HCT116 (cell line): ENCODE measurements at regions of chr10 and their contacts with region 1.

Region 1: GRCh38 chr10:97025613-97026242 is 160.0 kb downstream of the SLIT1 start:
- DNase-seq: peak; percentile 47
- ATAC-seq: peak; percentile 87
- H3K4me3 ChIP-seq: no peak overlapping the region
- H3K27ac ChIP-seq: no peak overlapping the region
- H3K4me1 ChIP-seq: peaks cover 11 to 20% of the 10 kb centered on the region in 2 experiments; a peak in 3 of 4 replicates
- H3K27me3 ChIP-seq: no peaks in the 10 kb centered on the region; the same call in 1 of the 2 replicates
- CTCF ChIP-seq: peak; percentile 66 to 87 (median 82)
- POLR2A ChIP-seq: no peak
- RAD21 ChIP-seq: peak; percentile 64

Region 2: GRCh38 chr10:96380817-96381216 is 644.9 kb before region 1 on chr10:
- CTCF ChIA-PET with region 1: no interaction called
- POLR2A ChIA-PET with region 1: no interaction called
- RAD21 ChIA-PET with region 1: no interaction called
- intact Hi-C with region 1: loop called (anchors 5 kb)
- DNase-seq: no peak
- ATAC-seq: no peak
- H3K4me3 ChIP-seq: no peak overlapping the region
- H3K27ac ChIP-seq: no peak overlapping the region
- H3K4me1 ChIP-seq: peaks cover 0 to 11% of the 10 kb centered on the region in 2 experiments; a peak in 3 of 4 replicates
- H3K27me3 ChIP-seq: no peaks in the 10 kb centered on the region
- CTCF ChIP-seq: no peak
- POLR2A ChIP-seq: no peak
- RAD21 ChIP-seq: no peak

Region 3: GRCh38 chr10:96395931-96396877 is 629.5 kb before region 1 on chr10:
- CTCF ChIA-PET with region 1: no interaction called
- POLR2A ChIA-PET with region 1: no interaction called
- RAD21 ChIA-PET with region 1: no interaction called
- intact Hi-C with region 1: loop called (anchors 2 kb)
- DNase-seq: peak; percentile 21
- ATAC-seq: peak; percentile 96
- H3K4me3 ChIP-seq: no peak overlapping the region
- H3K27ac ChIP-seq: no peak overlapping the region
- H3K4me1 ChIP-seq: no peaks in the 10 kb centered on the region
- H3K27me3 ChIP-seq: peaks cover 26% of the 10 kb centered on the region
- CTCF ChIP-seq: peak; percentile 79 to 96 (median 93)
- POLR2A ChIP-seq: no peak
- RAD21 ChIP-seq: peak; percentile 86

Region 4: DNA sequence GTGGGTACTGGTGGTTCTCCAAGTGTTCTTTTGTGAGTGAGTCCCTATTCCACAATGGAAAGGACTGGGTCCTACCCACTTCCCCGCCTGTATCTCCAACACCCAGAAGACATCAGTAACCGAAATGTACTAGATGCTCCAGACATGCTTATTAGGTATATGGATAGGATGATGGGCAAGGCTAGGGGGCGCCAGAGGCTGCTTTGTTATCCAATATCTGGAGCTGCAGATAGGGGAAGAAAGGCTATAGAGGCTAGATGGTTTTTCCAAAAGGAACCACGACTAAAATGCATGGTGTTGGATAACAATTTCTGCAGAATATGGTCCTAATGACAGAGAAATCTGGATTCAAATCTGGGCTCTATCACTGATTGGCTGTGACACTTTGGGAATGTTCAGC is 382.8 kb before region 1 on chr10:
- CTCF ChIA-PET with region 1: interaction called, 40 read pairs
- POLR2A ChIA-PET with region 1: interaction called, 3 read pairs
- RAD21 ChIA-PET with region 1: interaction called in 1 of 2 experiments, 3 read pairs
- intact Hi-C with region 1: loop called (anchors 5 kb)
- DNase-seq: peak; percentile 31
- ATAC-seq: peak; percentile 68
- H3K4me3 ChIP-seq: no peak overlapping the region
- H3K27ac ChIP-seq: no peak overlapping the region
- H3K4me1 ChIP-seq: peaks cover 3 to 22% of the 10 kb centered on the region in 2 experiments; a peak in 3 of 4 replicates
- H3K27me3 ChIP-seq: no peaks in the 10 kb centered on the region
- CTCF ChIP-seq: peak; percentile 69 to 77 (median 71); a peak in 5 of 6 replicates
- POLR2A ChIP-seq: no peak
- RAD21 ChIP-seq: peak; percentile 80

Region 5: GRCh38 chr10:96765406-96766240 is 260.1 kb before region 1 on chr10:
- CTCF ChIA-PET with region 1: interaction called, 11 read pairs
- POLR2A ChIA-PET with region 1: no interaction called
- RAD21 ChIA-PET with region 1: no interaction called
- intact Hi-C with region 1: loop called (anchors 1 kb)
- DNase-seq: peak; percentile 37
- ATAC-seq: peak; percentile 98
- H3K4me3 ChIP-seq: no peak overlapping the region
- H3K27ac ChIP-seq: no peak overlapping the region
- H3K4me1 ChIP-seq: no peaks in the 10 kb centered on the region
- H3K27me3 ChIP-seq: no peaks in the 10 kb centered on the region
- CTCF ChIP-seq: peak; percentile 84 to 95 (median 95)
- POLR2A ChIP-seq: no peak
- RAD21 ChIP-seq: peak; percentile 82

Region 6: DNA sequence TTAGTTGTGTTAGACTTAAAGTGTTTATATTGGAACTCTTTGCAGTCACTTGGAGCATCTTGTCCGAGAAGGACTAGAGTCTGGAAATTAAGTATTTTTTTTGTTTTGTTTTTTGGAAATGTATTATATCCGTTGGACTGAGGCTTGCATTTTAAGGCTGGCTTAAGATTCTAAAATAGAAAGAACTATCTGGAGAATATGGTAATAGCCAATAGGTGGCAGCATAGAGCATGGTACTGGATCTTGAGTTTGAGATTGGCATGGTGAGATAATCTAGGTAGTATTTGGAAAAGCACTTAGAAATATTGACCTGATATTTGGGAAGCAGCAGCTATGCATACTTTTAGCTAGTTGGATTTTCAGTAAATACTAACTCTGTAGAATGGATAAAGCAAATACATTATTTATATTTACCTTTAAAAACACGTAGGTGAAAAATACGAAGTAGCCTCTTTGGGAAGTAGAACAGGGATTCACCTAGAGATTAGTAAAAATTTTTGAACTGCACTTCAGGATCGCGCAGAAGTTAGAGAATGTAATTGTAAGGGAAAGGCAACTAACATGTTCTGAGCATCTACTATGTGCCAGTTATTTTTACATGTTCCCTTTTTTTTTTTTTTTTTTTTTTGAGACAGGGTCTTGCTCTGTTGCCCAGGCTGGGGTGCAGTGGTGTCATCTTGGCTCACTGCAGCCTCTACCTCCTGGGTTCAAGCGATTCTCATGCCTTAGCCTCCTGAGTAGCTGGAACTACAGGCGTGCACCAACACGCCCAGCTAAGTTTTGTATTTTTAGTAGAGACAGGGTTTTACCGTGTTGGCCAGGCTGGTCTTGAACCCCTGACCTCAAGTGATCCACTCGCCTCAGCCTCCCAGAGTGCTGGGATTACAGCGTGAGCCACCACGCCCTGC is 115.0 kb before region 1 on chr10:
- CTCF ChIA-PET with region 1: interaction called, 5 read pairs
- POLR2A ChIA-PET with region 1: no interaction called
- RAD21 ChIA-PET with region 1: no interaction called
- intact Hi-C with region 1: loop called (anchors 10 kb)
- DNase-seq: peak; percentile 24
- ATAC-seq: peak; percentile 79
- H3K4me3 ChIP-seq: no peak overlapping the region
- H3K27ac ChIP-seq: no peak overlapping the region
- H3K4me1 ChIP-seq: peaks cover 4 to 6% of the 10 kb centered on the region in 2 experiments; a peak in 3 of 4 replicates
- H3K27me3 ChIP-seq: no peaks in the 10 kb centered on the region
- CTCF ChIP-seq: peak; percentile 54 to 77 (median 68); a peak in 5 of 6 replicates
- POLR2A ChIP-seq: no peak
- RAD21 ChIP-seq: peak; percentile 57

Region 7: DNA sequence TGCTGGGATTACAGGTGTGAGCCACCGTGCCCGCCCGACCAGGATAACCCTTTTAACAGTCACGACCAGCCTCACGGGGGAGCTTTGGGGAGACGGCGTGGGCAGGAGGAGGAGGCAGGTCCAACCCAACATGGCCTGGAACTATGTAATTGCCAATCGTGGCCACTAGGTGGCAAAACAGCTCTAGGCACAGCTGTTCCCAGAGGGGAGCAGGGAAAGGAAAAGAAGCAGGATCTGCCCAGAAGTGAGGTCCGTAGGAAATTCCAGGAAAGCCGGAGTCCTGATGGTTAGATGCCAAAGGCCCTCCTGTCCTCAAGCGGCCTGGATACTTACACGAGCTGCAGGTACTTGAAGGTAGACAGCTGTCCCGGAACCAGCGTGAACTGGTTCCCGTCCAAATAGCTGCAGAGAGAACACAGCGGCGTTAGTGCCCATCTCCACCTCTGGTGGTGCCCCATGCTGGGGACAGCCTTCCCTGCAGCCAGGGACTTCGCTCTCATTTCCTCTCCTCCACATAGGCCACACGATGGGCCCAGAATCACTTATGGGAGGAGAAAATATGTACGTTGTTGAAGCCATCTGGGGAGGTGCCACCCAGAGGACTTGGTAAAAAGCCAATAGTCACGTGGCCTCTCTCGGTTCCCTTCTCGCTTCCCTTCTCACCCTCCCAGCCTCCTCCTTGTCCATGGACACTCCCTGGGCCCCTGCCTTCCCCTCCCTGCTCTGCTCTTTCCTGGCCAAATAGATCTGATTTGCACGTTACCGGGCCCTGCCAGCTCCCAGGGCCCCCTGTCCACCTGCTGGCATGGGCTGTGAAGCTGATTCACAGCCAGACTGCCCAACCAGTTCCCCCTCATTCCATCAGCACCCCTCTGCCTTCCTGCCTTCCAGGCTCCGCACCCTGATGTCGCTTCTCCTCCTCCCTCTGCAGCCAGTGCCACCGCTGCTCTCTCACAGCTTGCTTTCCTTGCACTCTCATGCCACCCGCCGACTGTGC is 11.9 kb after region 1 on chr10:
- CTCF ChIA-PET with region 1: interaction called, 107 read pairs
- POLR2A ChIA-PET with region 1: interaction called, 8 read pairs
- RAD21 ChIA-PET with region 1: no interaction called
- intact Hi-C with region 1: no loop called
- DNase-seq: peak; percentile 89
- ATAC-seq: peak; percentile 93
- H3K4me3 ChIP-seq: peak overlapping the region; percentile 38 to 55
- H3K27ac ChIP-seq: no peak overlapping the region
- H3K4me1 ChIP-seq: peaks cover 7 to 15% of the 10 kb centered on the region in 2 experiments; a peak in 3 of 4 replicates
- H3K27me3 ChIP-seq: no peaks in the 10 kb centered on the region
- CTCF ChIP-seq: peak; percentile 82 to 96 (median 87)
- POLR2A ChIP-seq: no peak
- RAD21 ChIP-seq: peak; percentile 89

Region 8: DNA sequence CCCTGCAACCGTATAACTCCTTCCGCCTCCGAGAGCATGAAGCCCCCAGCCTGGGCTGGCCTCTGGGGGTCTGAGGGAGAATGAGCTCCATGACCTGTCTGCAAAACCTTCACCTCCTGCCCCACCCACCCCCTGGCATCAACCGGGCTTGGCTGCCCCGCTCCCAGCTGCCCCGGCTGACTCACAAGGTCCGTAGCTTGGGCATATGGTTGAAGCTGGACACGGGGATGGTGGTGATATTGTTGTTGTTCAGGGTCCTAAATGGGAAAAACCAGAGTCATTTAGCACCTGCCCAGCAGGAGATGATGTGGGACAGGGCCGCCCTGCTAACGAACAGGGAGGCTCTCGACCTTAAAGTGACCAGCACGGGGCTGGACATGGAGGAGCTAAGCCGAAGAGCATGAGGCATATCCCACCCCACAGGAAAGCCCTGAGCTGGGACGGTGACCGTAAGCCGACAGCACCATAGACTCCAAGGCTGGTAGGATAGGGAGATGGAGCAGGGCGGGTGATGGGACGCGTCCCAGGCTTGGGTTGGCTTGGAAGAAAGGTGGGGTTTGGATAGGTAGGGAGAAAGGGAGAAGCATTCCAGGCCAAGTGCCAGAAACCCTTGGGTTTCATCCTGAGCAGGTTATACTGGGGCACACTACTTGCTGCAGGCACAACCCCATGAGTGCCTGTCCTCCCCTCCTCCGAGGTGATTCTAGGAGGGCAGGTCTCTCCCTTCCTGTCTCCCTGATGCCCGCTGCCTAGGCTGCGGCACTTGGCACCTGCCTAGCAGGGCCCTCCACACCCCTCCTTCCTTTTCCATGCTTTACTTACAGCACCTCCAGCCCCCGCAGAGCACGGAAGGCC is 38.5 kb after region 1 on chr10:
- CTCF ChIA-PET with region 1: no interaction called
- POLR2A ChIA-PET with region 1: no interaction called
- RAD21 ChIA-PET with region 1: no interaction called
- intact Hi-C with region 1: no loop called
- DNase-seq: no peak
- ATAC-seq: no peak
- H3K4me3 ChIP-seq: no peak overlapping the region
- H3K27ac ChIP-seq: no peak overlapping the region
- H3K4me1 ChIP-seq: peaks cover 0 to 8% of the 10 kb centered on the region in 2 experiments; a peak in 2 of 4 replicates
- H3K27me3 ChIP-seq: no peaks in the 10 kb centered on the region
- CTCF ChIP-seq: no peak
- POLR2A ChIP-seq: no peak
- RAD21 ChIP-seq: no peak

Region 9: GRCh38 chr10:97259119-97259518 is 233.4 kb after region 1 on chr10:
- CTCF ChIA-PET with region 1: no interaction called
- POLR2A ChIA-PET with region 1: no interaction called
- RAD21 ChIA-PET with region 1: no interaction called
- intact Hi-C with region 1: no loop called
- DNase-seq: no peak
- ATAC-seq: no peak
- H3K4me3 ChIP-seq: no peak overlapping the region
- H3K27ac ChIP-seq: no peak overlapping the region
- H3K4me1 ChIP-seq: no peaks in the 10 kb centered on the region
- H3K27me3 ChIP-seq: no peaks in the 10 kb centered on the region
- CTCF ChIP-seq: no peak
- POLR2A ChIP-seq: no peak
- RAD21 ChIP-seq: no peak